CD14-positive monocyte (primary cell): ENCODE measurements at regions of chr11 and their contacts with region 1.

Region 1: GRCh38 chr11:73469401-73469800 is 93.2 kb downstream of the RELT start:
- DNase-seq: no peak
- H3K4me3 ChIP-seq: no peak overlapping the region
- H3K4me3 Mint-ChIP-seq: no peak overlapping the region
- H3K27ac ChIP-seq: no peak overlapping the region
- H3K27ac Mint-ChIP-seq: peak overlapping the region in 3 of 7 donors; percentile 20 to 54 (median 46)
- H3K4me1 ChIP-seq: peaks cover 2 to 13% of the 10 kb centered on the region in 2 donors
- H3K4me1 Mint-ChIP-seq: peaks cover 27% of the 10 kb centered on the region
- H3K27me3 ChIP-seq: no peaks in the 10 kb centered on the region
- H3K27me3 Mint-ChIP-seq: peaks cover 0 to 2% (median 1%) of the 10 kb centered on the region in 3 donors
- CTCF ChIP-seq: no peak

Region 2: GRCh38 chr11:73423506-73423905 is 45.9 kb before region 1 on chr11:
- intact Hi-C with region 1: loop called (anchors 5 to 10 kb)
- DNase-seq: no peak
- H3K4me3 ChIP-seq: no peak overlapping the region
- H3K4me3 Mint-ChIP-seq: no peak overlapping the region
- H3K27ac ChIP-seq: peak overlapping the region in 1 of 2 donors; percentile 75
- H3K27ac Mint-ChIP-seq: peak overlapping the region in 3 of 7 donors; percentile 5 to 31 (median 14)
- H3K4me1 ChIP-seq: peaks cover 46 to 51% of the 10 kb centered on the region in 2 donors
- H3K4me1 Mint-ChIP-seq: peaks cover 72% of the 10 kb centered on the region
- H3K27me3 ChIP-seq: no peaks in the 10 kb centered on the region
- H3K27me3 Mint-ChIP-seq: no peaks in the 10 kb centered on the region
- CTCF ChIP-seq: no peak

Region 3: DNA sequence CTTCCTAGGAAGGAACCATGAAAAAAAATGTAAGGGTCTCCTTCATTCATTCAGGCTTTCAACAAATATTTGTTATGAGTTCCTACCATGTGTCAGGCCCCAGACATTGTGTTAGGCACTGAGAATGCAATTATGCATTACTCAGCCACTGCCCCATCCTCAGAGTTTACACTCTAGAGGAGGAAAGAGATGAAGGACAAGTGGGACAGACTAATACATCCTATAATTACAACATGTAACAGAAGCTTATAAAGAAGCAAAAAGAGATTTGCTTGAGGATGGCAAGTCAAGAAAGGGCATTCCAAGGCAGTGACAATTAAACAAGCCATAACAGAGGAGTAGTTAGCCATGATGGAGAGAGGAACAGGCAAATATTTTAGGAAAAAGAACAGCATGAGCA is 49.9 kb after region 1 on chr11:
- intact Hi-C with region 1: loop called in 1 of 2 experiments (anchors 5 kb)
- DNase-seq: no peak
- H3K4me3 ChIP-seq: no peak overlapping the region
- H3K4me3 Mint-ChIP-seq: no peak overlapping the region
- H3K27ac ChIP-seq: no peak overlapping the region
- H3K27ac Mint-ChIP-seq: peak overlapping the region in 1 of 7 donors; percentile 48
- H3K4me1 ChIP-seq: peaks cover 0 to 4% of the 10 kb centered on the region in 2 donors
- H3K4me1 Mint-ChIP-seq: peaks cover 21% of the 10 kb centered on the region
- H3K27me3 ChIP-seq: no peaks in the 10 kb centered on the region
- H3K27me3 Mint-ChIP-seq: peaks cover 0 to 3% (median 0%) of the 10 kb centered on the region in 3 donors
- CTCF ChIP-seq: no peak

Region 4: DNA sequence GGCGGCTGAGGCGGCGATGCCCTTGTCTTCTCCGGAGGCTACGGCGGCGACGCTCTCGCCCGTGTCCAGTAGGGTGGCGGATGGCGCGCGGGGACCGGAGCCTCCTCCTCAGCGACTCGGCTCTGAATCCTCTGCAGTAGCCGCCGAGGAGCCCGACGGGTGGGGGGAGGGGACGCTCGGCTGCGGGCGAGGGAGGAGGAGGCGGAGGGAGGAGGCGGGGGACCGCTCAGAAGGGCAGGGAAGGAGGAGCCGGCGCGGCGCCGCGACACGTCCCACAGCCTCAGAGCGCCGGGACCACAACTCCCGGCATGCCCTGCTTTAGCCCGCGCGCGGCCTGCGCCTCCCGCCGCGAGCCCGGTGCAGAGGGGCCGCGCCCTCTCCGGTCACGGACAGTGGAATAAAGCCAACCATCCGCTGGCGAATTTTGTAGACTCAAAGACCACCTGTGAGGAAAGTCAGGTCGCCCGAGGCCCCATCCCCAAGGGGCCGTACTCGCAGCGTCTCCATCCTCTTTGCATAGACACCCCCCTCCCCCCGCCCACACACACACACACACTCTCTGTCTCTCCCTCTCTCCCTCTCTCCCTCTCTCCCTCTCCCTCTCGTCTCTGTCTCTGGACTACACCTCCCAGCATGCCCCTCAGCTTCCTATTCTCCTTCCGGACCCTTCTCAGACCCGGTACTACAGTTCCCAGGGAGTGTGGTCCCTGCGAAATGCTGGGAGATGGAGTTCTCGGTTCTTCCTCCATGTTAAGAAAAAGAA is 128.7 kb after region 1 on chr11 and contains the start of gene FAM168A:
- intact Hi-C with region 1: loop called (anchors 5 to 10 kb)
- DNase-seq: peak; percentile 93 to 97 (median 94)
- H3K4me3 ChIP-seq: peak within 1 kb of the TSS; percentile 86 to 98 (median 97)
- H3K4me3 Mint-ChIP-seq: peak within 1 kb of the TSS; percentile 89 to 93
- H3K27ac ChIP-seq: peak within 1 kb of the TSS; percentile 57 to 88
- H3K27ac Mint-ChIP-seq: peak within 1 kb of the TSS; percentile 80 to 94 (median 92)
- H3K4me1 ChIP-seq: peaks cover 16 to 24% of the 10 kb centered on the region in 2 donors
- H3K4me1 Mint-ChIP-seq: peaks cover 33% of the 10 kb centered on the region
- H3K27me3 ChIP-seq: no peaks in the 10 kb centered on the region
- H3K27me3 Mint-ChIP-seq: peaks cover 0 to 2% (median 0%) of the 10 kb centered on the region in 3 donors
- CTCF ChIP-seq: peak; percentile 38
- polyA plus RNA-seq, gene FAM168A: 1.4 to 13.3 (median 2.1) TPM